ENCODE measurements at regions of chr1 and their contacts with region 1.

Region 1: GRCh38 chr1:154198756-154199562 is 7.1 kb upstream of the TPM3 start:
- DNase-seq: peak in 4 of 5 donors; percentile 21 to 60 (median 46)
- H3K4me3 ChIP-seq: peak overlapping the region; percentile 11
- H3K4me3 Mint-ChIP-seq: no peak overlapping the region
- H3K27ac ChIP-seq: no peak overlapping the region
- H3K27ac Mint-ChIP-seq: peak overlapping the region in 3 of 8 donors; percentile 11 to 48 (median 25)
- H3K4me1 ChIP-seq: peaks cover 8% of the 10 kb centered on the region
- H3K4me1 Mint-ChIP-seq: no peaks in the 10 kb centered on the region
- H3K27me3 ChIP-seq: no peaks in the 10 kb centered on the region
- H3K27me3 Mint-ChIP-seq: peaks cover 4 to 7% of the 10 kb centered on the region in 2 donors

Region 2: DNA sequence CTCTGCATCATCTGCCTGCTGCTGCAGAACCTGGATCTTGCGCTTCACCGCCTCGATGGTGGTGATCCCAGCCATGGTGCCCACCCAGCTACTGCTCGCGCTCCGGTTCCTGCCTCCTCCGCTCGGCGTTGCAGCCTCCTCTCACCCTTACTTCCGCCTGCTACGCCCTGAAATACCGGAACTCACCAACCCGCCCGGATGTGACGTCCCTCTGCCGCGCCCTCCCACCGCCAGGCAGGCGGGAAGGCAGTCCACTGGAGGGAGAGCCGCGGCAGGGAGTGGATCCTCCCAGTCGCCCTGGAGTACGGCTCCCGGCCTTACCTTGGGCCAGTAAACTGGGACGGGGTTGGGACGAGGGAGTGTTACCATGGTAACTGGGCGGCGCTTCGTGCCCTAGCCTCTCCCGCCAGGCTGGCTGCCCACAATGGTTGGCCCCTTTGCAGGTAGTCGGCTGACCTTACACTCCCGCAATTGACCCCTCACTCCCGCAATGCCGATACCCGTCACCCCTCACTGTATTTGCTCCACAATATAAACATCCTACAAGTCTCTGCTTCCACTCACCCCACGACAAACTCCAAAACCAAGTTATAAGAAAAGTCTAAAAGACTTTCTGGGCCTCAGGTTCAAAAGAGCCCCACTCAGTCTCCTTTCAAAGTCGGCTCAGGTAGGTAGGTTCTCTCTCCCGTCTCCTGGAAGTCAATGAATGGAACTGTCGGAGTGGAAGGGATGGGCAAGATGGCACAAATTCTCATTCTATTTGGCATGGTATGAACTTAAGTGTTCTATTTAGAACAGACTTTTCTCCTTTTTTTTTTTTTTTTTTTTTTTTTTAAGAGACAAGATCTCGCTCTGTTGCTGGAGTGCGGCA is 15.7 kb before region 1 on chr1:
- CTCF ChIA-PET with region 1: no interaction called
- POLR2A ChIA-PET with region 1: no interaction called
- DNase-seq: peak; percentile 90 to 95 (median 93)
- H3K4me3 ChIP-seq: peak overlapping the region; percentile 85
- H3K4me3 Mint-ChIP-seq: peak overlapping the region; percentile 100
- H3K27ac ChIP-seq: peak overlapping the region; percentile 92
- H3K27ac Mint-ChIP-seq: peak overlapping the region; percentile 94 to 100 (median 100)
- H3K4me1 ChIP-seq: peaks cover 43% of the 10 kb centered on the region
- H3K4me1 Mint-ChIP-seq: peaks cover 41 to 51% (median 49%) of the 10 kb centered on the region in 3 donors
- H3K27me3 ChIP-seq: no peaks in the 10 kb centered on the region
- H3K27me3 Mint-ChIP-seq: peaks cover 0 to 7% of the 10 kb centered on the region in 2 donors

Region 3: DNA sequence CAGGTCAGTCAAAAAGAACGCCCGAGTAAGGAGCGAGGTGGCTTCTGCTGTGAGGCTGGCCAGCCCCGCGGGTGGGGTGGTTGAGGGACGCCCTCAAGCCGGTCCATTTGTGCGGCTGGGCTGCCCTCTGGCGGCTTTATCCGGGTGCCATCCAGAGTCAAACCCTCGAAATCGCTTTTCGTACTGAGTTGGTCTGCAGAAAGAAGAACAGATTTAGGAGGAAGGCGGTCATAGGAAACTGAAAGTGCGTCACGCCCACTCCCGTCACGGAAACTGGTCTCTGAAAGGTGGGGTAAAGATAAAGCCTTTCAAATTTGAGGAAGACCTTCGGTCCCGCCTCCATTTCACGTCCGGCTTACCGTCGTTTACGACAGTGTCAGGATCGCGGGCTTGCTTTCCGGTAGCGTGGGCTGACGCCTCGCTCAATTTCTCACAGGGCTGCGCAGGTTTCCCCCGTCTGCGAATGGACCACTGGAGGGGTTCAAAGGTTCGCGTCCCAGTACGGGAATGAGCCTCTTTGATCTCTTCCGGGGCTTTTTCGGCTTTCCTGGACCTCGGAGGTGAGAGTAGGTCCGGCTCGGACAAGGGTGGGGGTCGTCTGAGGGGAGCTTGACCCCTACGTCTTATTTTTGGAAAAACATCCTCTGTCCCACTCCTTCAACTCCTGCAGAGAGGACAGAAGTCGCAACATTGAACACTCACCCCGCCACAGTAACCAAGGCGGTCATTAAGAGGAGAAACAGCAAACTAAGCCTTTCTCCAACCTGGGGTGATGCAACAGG is 73.4 kb after region 1 on chr1 and contains the start of gene HAX1:
- CTCF ChIA-PET with region 1: interaction called, 22 read pairs
- POLR2A ChIA-PET with region 1: no interaction called
- DNase-seq: peak; percentile 93 to 98 (median 97)
- H3K4me3 ChIP-seq: peak within 1 kb of the TSS; percentile 92
- H3K4me3 Mint-ChIP-seq: peak within 1 kb of the TSS; percentile 94 to 99 (median 98)
- H3K27ac ChIP-seq: peak within 1 kb of the TSS; percentile 88
- H3K27ac Mint-ChIP-seq: peak within 1 kb of the TSS; percentile 94 to 99 (median 99)
- H3K4me1 ChIP-seq: peaks cover 19% of the 10 kb centered on the region
- H3K4me1 Mint-ChIP-seq: peaks cover 35 to 41% (median 40%) of the 10 kb centered on the region in 3 donors
- H3K27me3 ChIP-seq: no peaks in the 10 kb centered on the region
- H3K27me3 Mint-ChIP-seq: peaks cover 0 to 3% of the 10 kb centered on the region in 2 donors
- total RNA-seq, gene HAX1: 145 to 153 TPM